ENCODE measurements at regions of chr16 and their contacts with region 1.

Region 1: GRCh38 chr16:87062569-87063442 is 254.4 kb downstream of the C16orf95 start:
- DNase-seq: peak; percentile 30
- ATAC-seq: peak; percentile 98
- H3K4me3 ChIP-seq: peak overlapping the region; percentile 27 to 49
- H3K27ac ChIP-seq: 0 out of 2 replicates have a peak overlapping the region, but pooled peaks have one; percentile 23
- H3K4me1 ChIP-seq: no peaks in the 10 kb centered on the region; the same call in 1 of the 2 replicates
- H3K27me3 ChIP-seq: no peaks in the 10 kb centered on the region
- CTCF ChIP-seq: peak; percentile 84

Region 2: DNA sequence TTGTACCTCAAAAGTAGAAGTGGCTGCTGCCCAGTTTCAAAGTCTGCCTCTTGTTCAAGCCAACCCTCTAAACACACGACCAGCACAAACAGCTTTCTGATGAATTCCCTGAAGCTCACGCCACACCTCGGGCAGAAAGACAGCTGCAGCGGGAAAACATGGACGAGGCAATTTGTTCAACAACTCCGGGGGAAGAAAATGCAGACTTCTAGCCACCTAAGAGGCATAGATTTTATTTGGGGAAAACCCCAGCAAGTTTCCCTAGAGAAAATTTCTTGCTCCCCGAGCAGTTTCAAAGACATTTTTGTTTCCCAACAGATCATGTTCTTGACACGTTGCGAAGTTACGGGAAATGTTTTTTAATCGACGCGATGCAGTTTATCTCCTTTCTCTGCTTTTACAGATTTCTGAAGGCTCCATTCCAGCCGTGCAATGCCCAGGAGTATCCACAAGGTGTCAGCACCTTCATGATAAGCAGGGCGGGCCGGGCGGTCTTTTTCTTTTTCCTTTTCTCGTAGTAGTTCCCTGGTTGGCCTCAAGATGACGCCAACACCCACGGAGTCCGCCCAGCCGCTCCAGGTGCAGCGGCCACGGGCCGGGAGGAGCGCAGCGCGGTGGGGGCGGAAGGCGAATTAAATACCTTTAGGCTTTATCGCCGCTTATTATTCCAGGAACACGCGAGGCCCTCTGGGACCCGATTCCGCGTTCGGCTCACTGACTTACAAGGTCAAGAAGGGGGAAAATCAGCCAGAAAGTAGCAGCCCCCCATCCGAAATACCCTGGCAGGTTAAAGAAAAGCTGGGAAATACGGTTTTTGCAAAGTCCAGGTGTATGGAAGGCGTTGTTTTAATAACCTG is 499.1 kb before region 1 on chr16:
- CTCF ChIA-PET with region 1: interaction called, 11 read pairs
- POLR2A ChIA-PET with region 1: no interaction called
- in situ Hi-C with region 1: no loop called
- intact Hi-C with region 1: loop called (anchors 2 kb)
- DNase-seq: no peak
- ATAC-seq: peak; percentile 26
- H3K4me3 ChIP-seq: peak overlapping the region; percentile 47 to 77
- H3K27ac ChIP-seq: peak overlapping the region; percentile 89
- H3K4me1 ChIP-seq: peaks cover 17% of the 10 kb centered on the region
- H3K27me3 ChIP-seq: no peaks in the 10 kb centered on the region
- CTCF ChIP-seq: peak; percentile 100

Region 3: GRCh38 chr16:87350681-87351319 is 288.0 kb after region 1 on chr16:
- CTCF ChIA-PET with region 1: no interaction called
- POLR2A ChIA-PET with region 1: no interaction called
- in situ Hi-C with region 1: no loop called
- intact Hi-C with region 1: no loop called
- DNase-seq: no peak
- ATAC-seq: no peak
- H3K4me3 ChIP-seq: no peak overlapping the region
- H3K27ac ChIP-seq: no peak overlapping the region
- H3K4me1 ChIP-seq: no peaks in the 10 kb centered on the region
- H3K27me3 ChIP-seq: no peaks in the 10 kb centered on the region
- CTCF ChIP-seq: no peak

Measured in Panc1 (cell line).